IMR-90 (cell line): ENCODE measurements at regions of chr20 and their contacts with region 1.

Region 1: DNA sequence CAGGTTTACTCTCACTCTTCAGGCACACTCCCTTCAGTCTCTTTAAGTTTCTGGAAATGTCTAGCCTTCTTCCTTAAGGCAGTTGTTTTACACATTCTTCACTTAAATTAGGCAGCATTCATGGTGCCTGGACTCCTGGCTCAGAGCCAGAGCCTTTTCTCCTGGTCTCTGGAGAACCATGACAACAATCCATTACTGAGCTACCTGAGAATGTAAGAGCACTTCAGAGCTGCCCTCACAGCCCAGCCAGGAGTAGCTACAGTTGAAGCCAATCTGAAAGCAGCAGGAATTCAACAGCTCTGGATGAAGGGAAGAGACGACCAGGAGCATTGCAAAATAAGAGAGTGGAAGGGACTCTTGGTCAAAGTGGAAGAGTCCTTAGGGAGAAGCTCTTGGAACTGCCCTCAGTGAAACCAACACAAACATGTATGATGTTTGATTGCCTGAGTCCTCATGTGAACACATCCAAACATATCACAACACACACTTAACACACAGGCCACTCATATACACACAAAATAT is 416.8 kb upstream of the SPTLC3 start:
- DNase-seq: no peak
- ATAC-seq: no peak
- H3K4me3 ChIP-seq: no peak overlapping the region
- H3K27ac ChIP-seq: no peak overlapping the region
- H3K4me1 ChIP-seq: no peaks in the 10 kb centered on the region
- H3K27me3 ChIP-seq: no peaks in the 10 kb centered on the region
- CTCF ChIP-seq: no peak
- POLR2A ChIP-seq: no peak
- RAD21 ChIP-seq: no peak

Region 2: DNA sequence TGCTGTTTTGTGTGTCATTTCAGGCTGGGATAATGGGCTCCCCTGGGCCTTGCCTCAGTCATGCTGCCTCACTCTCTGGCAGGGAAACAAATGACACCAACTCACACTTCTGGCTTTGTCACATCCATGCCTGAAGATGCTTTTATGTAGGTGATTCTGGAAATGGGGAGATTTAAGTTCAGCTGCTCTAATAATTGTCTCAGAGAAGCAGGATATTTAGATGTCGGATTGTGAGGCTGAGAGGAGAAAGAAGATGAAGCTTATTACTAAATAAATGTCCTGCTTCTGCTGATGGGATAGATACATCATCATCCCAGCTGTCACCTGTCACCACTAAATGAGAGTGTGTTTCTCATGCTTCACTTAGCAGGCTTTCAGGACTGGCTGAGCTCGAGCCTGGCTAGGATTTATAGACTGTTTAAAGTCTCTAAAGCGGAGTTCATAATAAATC is 63.4 kb before region 1 on chr20:
- CTCF ChIA-PET with region 1: no interaction called
- POLR2A ChIA-PET with region 1: no interaction called
- dilution Hi-C with region 1: no loop called
- in situ Hi-C with region 1: no loop called
- intact Hi-C with region 1: loop called (anchors 2 kb)
- DNase-seq: no peak
- ATAC-seq: no peak
- H3K4me3 ChIP-seq: no peak overlapping the region
- H3K27ac ChIP-seq: no peak overlapping the region
- H3K4me1 ChIP-seq: no peaks in the 10 kb centered on the region
- H3K27me3 ChIP-seq: no peaks in the 10 kb centered on the region
- CTCF ChIP-seq: no peak
- POLR2A ChIP-seq: no peak
- RAD21 ChIP-seq: no peak

Region 3: GRCh38 chr20:12702312-12702711 is 110.3 kb after region 1 on chr20:
- CTCF ChIA-PET with region 1: no interaction called
- POLR2A ChIA-PET with region 1: no interaction called
- dilution Hi-C with region 1: no loop called
- in situ Hi-C with region 1: no loop called
- intact Hi-C with region 1: no loop called
- DNase-seq: no peak
- ATAC-seq: no peak
- H3K4me3 ChIP-seq: no peak overlapping the region
- H3K27ac ChIP-seq: no peak overlapping the region
- H3K4me1 ChIP-seq: no peaks in the 10 kb centered on the region
- H3K27me3 ChIP-seq: no peaks in the 10 kb centered on the region
- CTCF ChIP-seq: no peak
- POLR2A ChIP-seq: no peak
- RAD21 ChIP-seq: no peak